ENCODE measurements at regions of chr16 and their contacts with region 1.

Region 1: GRCh38 chr16:28277537-28278388 is 14.6 kb upstream of the SBK1 start:
- DNase-seq: peak; percentile 81 to 92 (median 88)
- H3K4me3 ChIP-seq: peak overlapping the region; percentile 14 to 71 (median 55)
- H3K27ac ChIP-seq: peak overlapping the region in 5 of 59 donors; percentile 3 to 73 (median 48)
- H3K27me3 ChIP-seq: peaks cover 0 to 16% (median 0%) of the 10 kb centered on the region in 45 donors
- CTCF ChIP-seq: peak; percentile 71 to 100 (median 99)

Region 2: DNA sequence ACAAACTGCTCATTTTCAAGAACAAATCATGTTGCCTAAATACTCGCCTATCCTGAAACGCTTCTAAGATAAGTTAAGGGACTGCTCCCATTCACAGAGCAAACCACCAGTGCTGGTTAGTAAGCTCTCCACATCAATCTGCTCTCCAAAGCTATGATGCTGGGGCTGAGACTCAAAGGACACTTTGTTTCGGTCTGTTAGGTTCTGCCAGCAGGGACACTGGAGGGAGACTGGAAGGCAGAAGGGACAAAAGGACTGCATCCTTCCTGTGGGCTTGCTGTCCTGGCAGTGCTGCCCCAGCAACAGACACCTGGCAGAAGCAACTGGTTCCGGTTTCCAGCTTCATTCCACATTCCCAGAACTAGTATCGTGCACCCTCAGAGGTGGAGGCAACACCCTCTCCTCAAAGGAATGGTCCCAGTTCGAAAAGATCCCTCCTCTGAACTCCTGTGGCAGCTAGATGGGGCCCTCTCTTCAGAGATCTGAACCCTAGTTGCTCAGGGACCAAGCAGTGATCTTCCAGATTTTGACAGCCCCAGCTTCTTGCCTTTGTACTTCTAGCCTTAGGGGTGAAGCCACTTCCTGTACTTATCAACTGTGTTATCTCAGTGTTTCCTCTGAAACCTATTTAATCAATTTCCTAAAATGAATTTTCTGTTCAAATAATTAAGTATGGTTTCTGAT is 140.9 kb before region 1 on chr16:
- intact Hi-C with region 1: loop called in 1 of 2 experiments (anchors 10 kb)
- DNase-seq: peak in 2 of 10 donors; percentile 32 to 48
- H3K4me3 ChIP-seq: no peak overlapping the region
- H3K27ac ChIP-seq: peak overlapping the region in 37 of 59 donors; percentile 1 to 70 (median 45)
- H3K27me3 ChIP-seq: no peaks in the 10 kb centered on the region
- CTCF ChIP-seq: peak in 23 of 56 donors; percentile 9 to 49 (median 24)

Region 3: GRCh38 chr16:28158136-28158535 is 119.6 kb before region 1 on chr16:
- intact Hi-C with region 1: no loop called
- DNase-seq: no peak
- H3K4me3 ChIP-seq: peak overlapping the region in 3 of 59 donors; percentile 10 to 15 (median 14)
- H3K27ac ChIP-seq: peak overlapping the region in 43 of 59 donors; percentile 1 to 66 (median 50)
- H3K27me3 ChIP-seq: no peaks in the 10 kb centered on the region
- CTCF ChIP-seq: no peak

Region 4: GRCh38 chr16:28317040-28317880 is 39.5 kb after region 1 on chr16:
- intact Hi-C with region 1: loop called (anchors 2 kb)
- DNase-seq: peak in 7 of 10 donors; percentile 47 to 72 (median 64)
- H3K4me3 ChIP-seq: no peak overlapping the region
- H3K27ac ChIP-seq: no peak overlapping the region
- H3K27me3 ChIP-seq: no peaks in the 10 kb centered on the region
- CTCF ChIP-seq: peak; percentile 67 to 96 (median 89)

Region 5: DNA sequence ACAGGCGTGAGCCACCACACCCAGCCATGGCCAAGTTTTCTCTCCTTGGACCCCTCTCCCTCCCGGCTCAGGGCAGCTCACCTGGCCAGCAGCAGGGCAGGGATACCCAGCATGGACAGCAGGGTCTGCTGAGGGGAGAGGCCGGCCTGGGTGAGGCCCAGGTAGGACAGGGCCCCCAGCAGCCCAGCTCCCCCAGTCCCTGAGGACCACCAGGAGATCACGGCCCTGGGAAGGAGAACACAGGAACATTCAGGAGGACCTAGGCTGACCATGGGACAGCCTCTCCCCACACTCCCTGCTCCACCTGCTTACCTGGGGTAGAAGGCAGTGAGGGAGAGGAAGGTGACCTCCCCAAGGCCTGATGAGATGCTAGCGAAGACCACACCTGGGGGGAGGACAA is 208.5 kb after region 1 on chr16:
- intact Hi-C with region 1: loop called in 1 of 2 experiments (anchors 5 kb)
- DNase-seq: no peak
- H3K4me3 ChIP-seq: no peak overlapping the region
- H3K27ac ChIP-seq: no peak overlapping the region
- H3K27me3 ChIP-seq: no peaks in the 10 kb centered on the region
- CTCF ChIP-seq: no peak

Region 6: DNA sequence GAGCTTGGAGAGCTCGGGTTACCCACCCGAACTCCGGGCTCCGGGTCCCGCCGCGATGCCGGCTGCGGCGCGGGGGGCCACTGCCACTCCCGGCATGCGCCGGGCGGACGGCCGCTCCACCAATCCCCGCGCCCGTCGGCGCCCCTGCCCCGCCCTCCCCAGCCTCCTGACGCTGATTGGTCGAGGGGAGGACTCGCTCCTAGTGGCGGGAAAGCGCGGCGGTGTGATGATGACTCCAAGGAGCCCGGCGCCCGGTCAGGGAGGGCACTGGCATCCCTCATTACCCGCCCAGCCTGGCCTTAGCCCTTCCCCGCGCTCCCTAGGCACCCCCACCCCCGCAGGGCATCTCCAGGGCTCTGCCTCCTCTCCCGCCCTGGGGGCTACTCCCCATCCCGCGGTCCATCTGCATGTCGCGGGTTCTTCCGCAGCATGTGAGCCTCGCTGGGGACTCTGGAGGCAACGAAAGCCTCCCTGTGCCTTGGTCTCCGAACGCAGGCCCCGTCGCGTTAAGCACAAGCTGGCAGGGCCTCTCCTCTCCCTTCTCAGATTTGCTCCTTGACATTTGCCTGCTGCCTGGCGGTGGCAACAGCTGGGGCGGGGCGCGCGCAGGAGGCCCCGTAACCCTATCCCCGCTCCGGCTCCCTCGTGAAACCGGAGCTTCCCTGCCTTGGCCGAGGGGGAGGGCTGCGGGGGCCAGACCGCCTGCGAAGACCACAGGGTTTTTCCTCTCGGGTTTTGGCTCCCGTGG is 602.3 kb after region 1 on chr16:
- intact Hi-C with region 1: no loop called
- DNase-seq: peak; percentile 83 to 90 (median 88)
- H3K4me3 ChIP-seq: peak overlapping the region; percentile 38 to 93 (median 80)
- H3K27ac ChIP-seq: peak overlapping the region in 10 of 59 donors; percentile 9 to 71 (median 32)
- H3K27me3 ChIP-seq: peaks cover 0 to 7% (median 0%) of the 10 kb centered on the region in 45 donors
- CTCF ChIP-seq: peak in 41 of 56 donors; percentile 9 to 57 (median 37)

Measured in dorsolateral prefrontal cortex (tissue), 120 donors.